ENCODE measurements at regions of chr12 and their contacts with region 1.

Region 1: GRCh38 chr12:76559400-76560085 is at the start of gene OSBPL8:
- DNase-seq: peak; percentile 85 to 98 (median 91)
- ATAC-seq: peak; percentile 88
- H3K4me3 ChIP-seq: peak within 1 kb of the TSS; percentile 97
- H3K4me3 Mint-ChIP-seq: peak within 1 kb of the TSS; percentile 88 to 99 (median 96)
- H3K27ac ChIP-seq: peak within 1 kb of the TSS; percentile 96
- H3K27ac Mint-ChIP-seq: peak within 1 kb of the TSS; percentile 91 to 98 (median 98)
- H3K4me1 ChIP-seq: peaks cover 21 to 29% of the 10 kb centered on the region in 2 donors
- H3K4me1 Mint-ChIP-seq: peaks cover 20 to 45% (median 35%) of the 10 kb centered on the region in 7 donors
- H3K27me3 ChIP-seq: no peaks in the 10 kb centered on the region
- H3K27me3 Mint-ChIP-seq: no peaks in the 10 kb centered on the region
- total RNA-seq, gene OSBPL8: 113 to 146 (median 119) TPM

Region 2: GRCh38 chr12:75480469-75480949 is 1079.0 kb before region 1 on chr12 and contains the start of gene GLIPR1:
- CTCF ChIA-PET with region 1: no interaction called
- POLR2A ChIA-PET with region 1: no interaction called
- intact Hi-C with region 1: loop called (anchors 1 to 10 kb)
- DNase-seq: peak; percentile 54 to 83 (median 76)
- ATAC-seq: peak; percentile 86
- H3K4me3 ChIP-seq: peak within 1 kb of the TSS; percentile 82
- H3K4me3 Mint-ChIP-seq: peak within 1 kb of the TSS; percentile 86 to 99 (median 97)
- H3K27ac ChIP-seq: peak within 1 kb of the TSS; percentile 73
- H3K27ac Mint-ChIP-seq: peak within 1 kb of the TSS; percentile 92 to 100 (median 97)
- H3K4me1 ChIP-seq: peaks cover 49 to 54% of the 10 kb centered on the region in 2 donors
- H3K4me1 Mint-ChIP-seq: peaks cover 50 to 85% (median 75%) of the 10 kb centered on the region in 7 donors
- H3K27me3 ChIP-seq: no peaks in the 10 kb centered on the region
- H3K27me3 Mint-ChIP-seq: no peaks in the 10 kb centered on the region
- total RNA-seq, gene GLIPR1: 28.2 to 132 (median 48.7) TPM

Region 3: GRCh38 chr12:76031537-76032073 is 527.9 kb before region 1 on chr12 and contains the start of gene PHLDA1:
- CTCF ChIA-PET with region 1: no interaction called
- POLR2A ChIA-PET with region 1: interaction called, 7 read pairs
- intact Hi-C with region 1: loop called (anchors 1 to 2 kb)
- DNase-seq: peak; percentile 56 to 97 (median 69)
- ATAC-seq: peak; percentile 91
- H3K4me3 ChIP-seq: peak within 1 kb of the TSS; percentile 76
- H3K4me3 Mint-ChIP-seq: peak within 1 kb of the TSS; percentile 85 to 98 (median 93)
- H3K27ac ChIP-seq: peak within 1 kb of the TSS; percentile 74
- H3K27ac Mint-ChIP-seq: peak within 1 kb of the TSS; percentile 74 to 98 (median 82)
- H3K4me1 ChIP-seq: peaks cover 5% of the 10 kb centered on the region in 2 donors
- H3K4me1 Mint-ChIP-seq: peaks cover 5 to 57% (median 23%) of the 10 kb centered on the region in 7 donors
- H3K27me3 ChIP-seq: no peaks in the 10 kb centered on the region
- H3K27me3 Mint-ChIP-seq: peaks cover 0 to 5% (median 0%) of the 10 kb centered on the region in 5 donors
- total RNA-seq, gene PHLDA1: 1.1 to 25.1 (median 4.6) TPM

Region 4: DNA sequence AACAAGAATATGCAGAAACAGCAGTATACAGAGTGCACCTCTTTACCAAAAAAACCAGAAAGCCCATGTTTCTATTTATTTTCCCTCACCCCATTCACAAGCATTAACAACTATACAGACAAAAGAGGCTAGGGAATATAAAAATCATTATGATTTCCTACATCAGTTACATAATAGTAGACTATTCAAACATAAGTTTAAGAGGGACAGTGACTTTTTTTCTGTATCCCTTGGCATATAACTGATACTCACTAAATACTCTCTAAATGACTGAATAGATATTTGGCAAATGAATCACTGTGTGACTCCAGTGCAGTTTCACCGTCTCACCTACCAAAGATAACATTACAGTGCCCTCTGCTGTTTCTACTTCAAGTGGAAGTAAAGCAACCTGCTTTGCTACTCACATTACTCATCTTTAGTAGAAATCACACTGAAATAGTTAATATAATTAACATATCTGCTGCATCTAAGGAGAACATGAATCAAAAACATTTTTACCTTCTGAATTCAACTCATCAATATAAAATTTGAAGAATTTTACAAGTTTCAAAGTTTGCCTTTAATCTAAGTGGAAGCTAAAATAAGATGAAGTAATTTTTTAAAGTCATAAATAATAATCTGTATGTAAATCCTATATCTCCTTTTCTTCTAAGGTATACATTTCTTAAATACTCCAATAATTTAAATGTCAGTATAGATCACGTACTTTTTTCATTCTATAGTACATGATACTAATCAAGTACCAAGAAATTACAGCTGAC is 103.8 kb before region 1 on chr12:
- CTCF ChIA-PET with region 1: interaction called, 18 read pairs
- POLR2A ChIA-PET with region 1: interaction called, 11 read pairs
- intact Hi-C with region 1: loop called in 1 of 2 experiments (anchors 1 kb)
- DNase-seq: peak in 6 of 9 donors; percentile 15 to 49 (median 38)
- ATAC-seq: peak; percentile 78
- H3K4me3 ChIP-seq: no peak overlapping the region
- H3K4me3 Mint-ChIP-seq: peak overlapping the region in 1 of 10 donors; percentile 38
- H3K27ac ChIP-seq: no peak overlapping the region
- H3K27ac Mint-ChIP-seq: peak overlapping the region in 3 of 9 donors; percentile 36 to 65 (median 46)
- H3K4me1 ChIP-seq: peaks cover 14 to 16% of the 10 kb centered on the region in 2 donors
- H3K4me1 Mint-ChIP-seq: peaks cover 10 to 58% (median 37%) of the 10 kb centered on the region in 7 donors
- H3K27me3 ChIP-seq: no peaks in the 10 kb centered on the region
- H3K27me3 Mint-ChIP-seq: no peaks in the 10 kb centered on the region

Region 5: DNA sequence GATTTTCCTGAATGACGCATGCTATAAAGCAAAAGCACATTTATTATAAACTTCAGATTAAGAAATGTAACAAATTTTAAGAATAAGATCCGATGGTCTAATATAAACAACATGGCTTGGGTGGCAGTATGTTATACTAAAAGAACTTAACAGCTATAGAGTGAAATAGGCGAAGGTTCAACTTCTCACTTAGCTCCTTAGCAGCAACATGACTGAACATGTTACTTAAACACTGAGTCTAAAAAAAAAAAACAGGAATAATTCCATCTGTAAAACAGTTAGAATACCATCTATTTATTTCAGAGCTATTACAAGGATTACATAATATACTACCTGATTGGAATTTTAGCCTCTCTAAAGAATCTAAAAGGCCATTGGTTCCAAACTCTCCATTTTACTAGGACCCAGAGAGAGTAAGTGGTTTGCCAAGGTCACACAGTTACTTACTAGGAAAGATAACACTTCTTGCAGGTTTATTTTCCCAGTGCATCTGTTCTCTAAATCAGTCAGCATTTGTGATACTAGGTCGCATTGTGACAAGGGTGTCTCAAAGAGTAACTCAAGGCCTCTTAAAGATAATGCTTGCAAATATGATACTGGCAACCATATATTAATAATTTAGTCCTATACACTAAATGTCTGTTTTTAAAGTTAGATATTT is 14.8 kb before region 1 on chr12:
- CTCF ChIA-PET with region 1: no interaction called
- POLR2A ChIA-PET with region 1: interaction called, 11 read pairs
- intact Hi-C with region 1: loop called (anchors 1 to 2 kb)
- DNase-seq: no peak
- ATAC-seq: no peak
- H3K4me3 ChIP-seq: no peak overlapping the region
- H3K4me3 Mint-ChIP-seq: peak overlapping the region in 2 of 10 donors; percentile 6 to 17
- H3K27ac ChIP-seq: no peak overlapping the region
- H3K27ac Mint-ChIP-seq: peak overlapping the region in 1 of 9 donors; percentile 26
- H3K4me1 ChIP-seq: peaks cover 25 to 45% of the 10 kb centered on the region in 2 donors
- H3K4me1 Mint-ChIP-seq: peaks cover 51 to 94% (median 83%) of the 10 kb centered on the region in 7 donors
- H3K27me3 ChIP-seq: no peaks in the 10 kb centered on the region
- H3K27me3 Mint-ChIP-seq: no peaks in the 10 kb centered on the region

Region 6: GRCh38 chr12:76836633-76837032 is 277.1 kb after region 1 on chr12:
- CTCF ChIA-PET with region 1: no interaction called
- POLR2A ChIA-PET with region 1: no interaction called
- intact Hi-C with region 1: no loop called
- DNase-seq: no peak
- ATAC-seq: no peak
- H3K4me3 ChIP-seq: no peak overlapping the region
- H3K4me3 Mint-ChIP-seq: no peak overlapping the region
- H3K27ac ChIP-seq: no peak overlapping the region
- H3K27ac Mint-ChIP-seq: no peak overlapping the region
- H3K4me1 ChIP-seq: no peaks in the 10 kb centered on the region
- H3K4me1 Mint-ChIP-seq: peaks cover 0 to 2% (median 0%) of the 10 kb centered on the region in 7 donors
- H3K27me3 ChIP-seq: no peaks in the 10 kb centered on the region
- H3K27me3 Mint-ChIP-seq: no peaks in the 10 kb centered on the region

Region 7: DNA sequence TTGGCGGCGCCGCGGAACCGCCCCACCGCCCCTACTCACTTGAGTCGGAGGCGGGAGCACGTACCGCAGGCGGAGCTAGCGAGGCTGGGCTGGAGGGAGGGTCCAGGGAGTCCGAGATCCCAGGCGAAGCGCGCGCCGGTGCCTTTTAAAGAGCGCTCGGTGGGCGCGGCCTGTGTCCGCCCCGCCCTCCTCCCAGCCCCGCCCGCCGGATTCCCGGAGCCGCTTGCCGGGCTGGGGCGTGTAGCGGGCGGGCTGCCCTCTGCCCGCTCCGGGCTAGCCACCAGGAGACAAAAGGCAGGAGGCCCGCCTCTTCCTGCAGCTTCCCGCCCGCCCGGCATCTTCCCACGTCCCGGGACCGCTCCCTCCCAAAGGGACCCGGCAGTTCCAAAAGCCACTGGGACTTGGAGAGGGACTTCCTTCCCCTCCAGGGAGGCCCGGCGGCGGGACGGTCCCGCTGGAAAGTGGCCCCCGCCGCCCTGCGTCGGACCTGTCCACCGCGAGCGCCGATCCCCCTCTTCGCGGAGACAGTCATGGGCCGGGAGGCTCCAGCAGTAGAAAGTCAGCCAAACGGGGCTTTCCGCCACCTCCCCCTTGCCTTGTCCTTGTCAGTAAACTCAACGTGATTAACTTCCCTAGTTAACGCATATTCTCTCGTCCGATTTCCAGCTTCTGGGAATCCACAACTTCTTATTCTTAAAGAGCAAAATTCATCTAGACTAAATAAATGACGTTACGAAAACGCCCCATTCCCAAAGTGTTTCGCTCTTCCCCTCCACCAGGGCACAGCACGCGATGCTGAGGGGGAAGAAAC is 319.6 kb after region 1 on chr12 and contains the start of gene CSRP2:
- CTCF ChIA-PET with region 1: no interaction called
- POLR2A ChIA-PET with region 1: no interaction called
- intact Hi-C with region 1: loop called in 1 of 2 experiments (anchors 5 kb)
- DNase-seq: peak; percentile 16 to 74 (median 43)
- ATAC-seq: peak; percentile 77
- H3K4me3 ChIP-seq: peak within 1 kb of the TSS; percentile 43
- H3K4me3 Mint-ChIP-seq: peak within 1 kb of the TSS; percentile 92 to 96 (median 94)
- H3K27ac ChIP-seq: peak within 1 kb of the TSS; percentile 6
- H3K27ac Mint-ChIP-seq: peak within 1 kb of the TSS in 3 of 9 donors; percentile 64 to 76 (median 72)
- H3K4me1 ChIP-seq: peaks cover 6% of the 10 kb centered on the region in 2 donors
- H3K4me1 Mint-ChIP-seq: peaks cover 5 to 23% (median 14%) of the 10 kb centered on the region in 7 donors
- H3K27me3 ChIP-seq: peaks cover 0 to 10% of the 10 kb centered on the region in 2 donors
- H3K27me3 Mint-ChIP-seq: peaks cover 44 to 66% (median 53%) of the 10 kb centered on the region in 5 donors
- total RNA-seq, gene CSRP2: not detected

Region 8: GRCh38 chr12:78167510-78167909 is 1608.0 kb after region 1 on chr12:
- CTCF ChIA-PET with region 1: no interaction called
- POLR2A ChIA-PET with region 1: no interaction called
- intact Hi-C with region 1: no loop called
- DNase-seq: no peak
- ATAC-seq: no peak
- H3K4me3 ChIP-seq: no peak overlapping the region
- H3K4me3 Mint-ChIP-seq: no peak overlapping the region
- H3K27ac ChIP-seq: no peak overlapping the region
- H3K27ac Mint-ChIP-seq: no peak overlapping the region
- H3K4me1 ChIP-seq: no peaks in the 10 kb centered on the region
- H3K4me1 Mint-ChIP-seq: no peaks in the 10 kb centered on the region
- H3K27me3 ChIP-seq: no peaks in the 10 kb centered on the region
- H3K27me3 Mint-ChIP-seq: no peaks in the 10 kb centered on the region